ENCODE measurements at regions of chr1 and their contacts with region 1.

Region 1: DNA sequence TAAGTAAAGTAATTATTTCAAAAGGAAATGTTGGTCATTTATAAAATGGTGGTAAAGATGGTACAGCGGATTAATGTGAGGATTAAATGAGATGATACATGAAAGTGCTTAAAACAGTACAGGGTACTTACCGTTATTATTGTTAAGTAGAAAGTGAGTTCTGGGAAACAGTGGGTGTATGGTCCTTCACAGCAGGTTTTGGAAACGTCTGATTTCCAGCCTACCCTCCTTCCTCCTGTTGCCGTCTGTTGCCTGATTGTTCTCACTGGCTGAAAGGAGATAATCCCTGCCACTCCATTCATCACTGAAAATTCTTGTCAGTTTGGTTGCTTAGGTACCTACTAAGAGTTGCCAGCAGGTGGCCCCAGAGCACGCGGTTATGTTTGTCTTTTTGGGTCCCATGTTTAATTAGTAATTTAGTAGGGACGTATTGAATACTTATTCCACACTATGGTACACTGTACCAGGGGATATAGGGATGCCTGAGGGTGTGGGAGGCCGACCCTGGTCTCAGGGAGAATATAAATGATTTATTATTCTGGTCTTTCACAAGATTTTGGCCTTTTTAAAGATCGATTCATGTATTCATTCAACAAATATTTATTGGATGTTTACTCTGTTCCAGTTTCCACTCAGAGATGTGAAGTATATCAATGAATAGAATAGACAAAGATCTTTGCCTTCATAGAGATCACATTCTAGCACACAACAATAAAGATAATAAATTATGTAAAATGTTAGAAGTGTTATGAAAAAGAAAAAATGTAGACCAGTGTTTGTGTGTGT is 30.8 kb upstream of the RPTN start:
- DNase-seq: no peak
- H3K4me3 ChIP-seq: no peak overlapping the region
- CTCF ChIP-seq: peak; percentile 63

Region 2: GRCh38 chr1:152047730-152048402 is 142.0 kb before region 1 on chr1:
- CTCF ChIA-PET with region 1: interaction called, 271 read pairs
- POLR2A ChIA-PET with region 1: no interaction called
- DNase-seq: peak; percentile 98
- H3K4me3 ChIP-seq: peak overlapping the region; percentile 47
- CTCF ChIP-seq: peak; percentile 90

Region 3: GRCh38 chr1:152148981-152149380 is 40.9 kb before region 1 on chr1:
- CTCF ChIA-PET with region 1: interaction called, 114 read pairs
- POLR2A ChIA-PET with region 1: no interaction called
- DNase-seq: no peak
- H3K4me3 ChIP-seq: no peak overlapping the region
- CTCF ChIP-seq: no peak

Region 4: DNA sequence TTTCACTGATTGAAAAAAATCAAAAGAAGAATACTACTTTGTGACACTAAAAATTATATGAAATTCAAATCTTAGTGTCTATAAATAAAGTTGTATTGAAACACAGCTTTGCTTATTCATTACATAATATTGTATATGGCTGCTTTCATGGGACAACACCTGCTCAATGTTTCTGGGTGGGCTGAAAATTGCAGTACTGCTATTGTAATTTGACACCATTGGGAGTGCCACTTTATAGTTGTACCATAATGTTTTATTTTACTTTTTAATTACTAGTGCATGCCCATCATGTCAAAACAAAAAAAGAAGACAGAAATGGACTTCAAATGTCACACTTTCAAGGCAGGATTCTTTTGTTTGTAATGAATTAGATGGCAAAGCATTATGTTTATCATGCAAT is 14.3 kb before region 1 on chr1:
- CTCF ChIA-PET with region 1: interaction called, 80 read pairs
- POLR2A ChIA-PET with region 1: interaction called, 3 read pairs
- DNase-seq: no peak
- H3K4me3 ChIP-seq: no peak overlapping the region
- CTCF ChIP-seq: no peak

Region 5: GRCh38 chr1:152367434-152367833 is 177.6 kb after region 1 on chr1:
- CTCF ChIA-PET with region 1: no interaction called
- POLR2A ChIA-PET with region 1: no interaction called
- DNase-seq: no peak
- H3K4me3 ChIP-seq: no peak overlapping the region
- CTCF ChIP-seq: no peak

Region 6: DNA sequence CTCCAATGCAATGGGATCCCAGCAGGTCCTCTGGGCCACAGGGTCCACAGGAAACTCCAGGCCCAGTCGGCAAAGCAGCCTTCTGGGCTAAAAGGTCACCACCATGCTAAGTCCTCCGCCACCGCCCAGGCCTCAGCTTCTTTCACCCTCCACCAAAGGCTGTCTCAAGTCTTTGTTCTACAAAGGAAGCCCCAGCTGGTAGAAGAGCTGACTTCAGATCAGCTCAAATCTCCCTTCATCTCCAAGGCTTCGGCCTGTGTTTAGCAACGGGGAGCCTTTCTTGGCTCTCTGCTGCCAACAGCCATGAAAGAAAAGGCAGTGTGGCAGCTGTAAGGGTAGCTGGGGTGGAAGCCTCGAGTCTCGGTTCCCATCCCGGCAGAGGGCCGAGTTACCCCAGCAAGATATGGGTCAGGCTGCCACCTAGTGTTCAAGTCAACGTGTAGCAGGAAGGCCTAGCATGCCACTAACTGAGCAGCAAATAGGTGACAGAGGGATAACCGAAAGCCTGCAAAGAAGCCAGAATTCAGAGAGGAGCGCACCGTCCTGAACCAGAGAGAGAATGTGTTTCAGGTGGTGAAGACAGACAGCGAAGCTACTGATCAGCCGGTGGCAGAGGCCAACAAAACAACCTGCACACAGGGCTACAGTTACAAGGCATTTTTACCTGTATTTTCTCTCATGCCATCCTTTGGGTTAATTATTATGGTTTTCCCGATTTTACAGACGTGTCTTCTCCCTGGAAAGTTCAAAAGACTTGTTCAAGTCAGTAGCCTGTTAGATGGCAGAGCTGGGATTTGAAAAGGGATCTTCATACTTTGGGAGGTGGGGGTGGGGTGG is 251.0 kb after region 1 on chr1:
- CTCF ChIA-PET with region 1: interaction called, 20 read pairs
- POLR2A ChIA-PET with region 1: no interaction called
- DNase-seq: no peak
- H3K4me3 ChIP-seq: no peak overlapping the region
- CTCF ChIP-seq: peak; percentile 82